ENCODE measurements at regions of chr2 and their contacts with region 1.

Region 1: DNA sequence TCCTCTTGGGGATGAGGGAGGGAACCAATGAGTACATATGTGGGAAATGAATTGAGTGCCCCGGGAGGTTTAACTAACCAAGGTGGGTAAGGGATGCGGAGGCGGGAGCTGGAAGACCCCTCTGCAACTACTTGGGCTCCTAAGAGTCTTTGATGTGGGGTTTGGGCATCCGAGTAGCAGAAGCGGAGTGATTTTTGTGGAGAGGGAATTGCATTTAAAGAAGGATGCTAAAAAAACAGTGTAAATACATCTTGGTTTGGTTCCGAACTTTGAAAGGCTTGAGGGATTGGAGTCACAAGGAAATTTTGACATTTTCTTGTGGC is 215.7 kb downstream of the MCFD2 start:
- DNase-seq: no peak
- H3K4me3 Mint-ChIP-seq: peak overlapping the region; percentile 96
- H3K27ac Mint-ChIP-seq: peak overlapping the region; percentile 86
- H3K4me1 Mint-ChIP-seq: peaks cover 44% of the 10 kb centered on the region
- H3K27me3 Mint-ChIP-seq: peaks cover 4% of the 10 kb centered on the region

Region 2: GRCh38 chr2:46351750-46352138 is 348.2 kb before region 1 on chr2:
- intact Hi-C with region 1: loop called (anchors 5 kb)
- DNase-seq: peak; percentile 69
- H3K4me3 Mint-ChIP-seq: peak overlapping the region; percentile 80
- H3K27ac Mint-ChIP-seq: peak overlapping the region; percentile 95
- H3K4me1 Mint-ChIP-seq: peaks cover 84% of the 10 kb centered on the region
- H3K27me3 Mint-ChIP-seq: no peaks in the 10 kb centered on the region